Right ventricle myocardium superior (tissue), 1 donor: ENCODE measurements at regions of chr2 and their contacts with region 1.

Region 1: GRCh38 chr2:105487142-105488069 is 88.6 kb upstream of the FHL2 start:
- DNase-seq: peak; percentile 69
- ATAC-seq: peak; percentile 70

Region 2: GRCh38 chr2:105444219-105444598 is 43.2 kb before region 1 on chr2:
- intact Hi-C with region 1: loop called (anchors 5 kb)
- DNase-seq: no peak
- ATAC-seq: no peak

Region 3: DNA sequence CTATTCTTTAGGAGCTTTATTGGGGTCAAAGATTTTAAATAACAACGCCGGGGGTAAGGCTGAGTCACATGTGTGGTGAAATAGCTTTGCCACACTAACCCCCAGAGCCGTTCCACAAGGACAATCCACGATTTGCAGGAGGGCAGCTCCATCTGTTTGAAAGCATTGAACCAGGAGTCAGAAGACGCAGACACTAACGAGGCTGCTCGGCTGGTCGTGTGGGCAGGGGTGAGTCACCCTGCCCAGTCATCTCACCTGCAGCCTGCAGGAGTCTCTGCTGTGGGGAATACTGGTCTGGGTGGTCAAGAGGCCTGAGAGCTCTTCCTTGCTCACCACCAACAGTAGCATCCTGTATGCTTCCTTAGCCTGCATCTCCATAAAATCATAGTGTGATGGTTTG is 108.1 kb after region 1 on chr2:
- intact Hi-C with region 1: no loop called
- DNase-seq: no peak
- ATAC-seq: no peak